HCT116 (cell line): ENCODE measurements at regions of chr6 and their contacts with region 1.

Region 1: DNA sequence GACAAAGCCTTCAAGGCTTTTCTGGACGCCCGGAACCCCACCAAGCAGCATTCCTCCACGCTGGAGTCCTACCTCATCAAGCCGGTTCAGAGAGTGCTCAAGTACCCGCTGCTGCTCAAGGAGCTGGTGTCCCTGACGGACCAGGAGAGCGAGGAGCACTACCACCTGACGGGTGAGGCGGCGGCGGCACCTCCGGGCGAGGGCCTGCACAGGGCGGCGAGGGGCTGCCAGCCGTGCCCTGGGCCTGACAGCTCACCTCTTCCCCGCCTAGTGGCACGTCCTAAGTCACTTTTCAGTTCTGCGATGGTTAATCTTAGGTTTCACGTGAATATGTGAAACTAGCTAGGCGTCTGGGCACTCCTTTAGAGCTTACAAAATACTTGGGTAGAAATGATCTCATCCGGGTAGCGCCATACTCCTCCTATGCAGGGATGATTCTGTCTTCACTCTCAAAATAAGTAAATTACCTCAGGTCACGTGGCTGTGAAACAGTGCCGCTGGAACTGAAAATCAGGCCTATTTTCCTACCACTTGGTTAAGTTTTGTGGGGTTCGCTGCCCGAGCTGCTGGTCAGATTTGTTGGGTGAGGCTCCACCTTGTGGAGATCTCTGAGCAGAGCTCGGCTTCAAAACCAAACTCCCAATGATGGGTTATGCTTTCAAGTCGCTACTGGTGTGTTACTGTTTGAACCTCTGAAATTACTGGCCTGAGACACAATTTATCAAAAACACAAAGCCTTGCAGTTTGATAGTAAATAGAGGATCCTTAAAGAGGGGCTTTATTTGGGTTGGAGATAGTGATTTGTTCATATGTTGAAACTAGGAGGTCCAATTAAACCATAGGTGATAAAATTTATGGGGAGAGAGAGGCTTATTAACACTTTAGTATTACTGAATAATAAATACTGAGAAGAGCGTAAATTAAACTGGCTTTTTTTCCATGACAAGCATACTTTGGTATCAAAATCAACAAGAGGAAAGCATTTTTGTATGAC is 15.5 kb upstream of the CLDN20 start:
- DNase-seq: peak; percentile 21
- ATAC-seq: peak; percentile 74
- H3K4me3 ChIP-seq: no peak overlapping the region
- H3K27ac ChIP-seq: no peak overlapping the region
- H3K4me1 ChIP-seq: peaks cover 0 to 12% of the 10 kb centered on the region in 2 experiments; a peak in 2 of 4 replicates
- H3K27me3 ChIP-seq: no peaks in the 10 kb centered on the region
- CTCF ChIP-seq: peak; percentile 57 to 70 (median 59); a peak in 5 of 6 replicates
- POLR2A ChIP-seq: no peak
- RAD21 ChIP-seq: peak; percentile 76

Region 2: DNA sequence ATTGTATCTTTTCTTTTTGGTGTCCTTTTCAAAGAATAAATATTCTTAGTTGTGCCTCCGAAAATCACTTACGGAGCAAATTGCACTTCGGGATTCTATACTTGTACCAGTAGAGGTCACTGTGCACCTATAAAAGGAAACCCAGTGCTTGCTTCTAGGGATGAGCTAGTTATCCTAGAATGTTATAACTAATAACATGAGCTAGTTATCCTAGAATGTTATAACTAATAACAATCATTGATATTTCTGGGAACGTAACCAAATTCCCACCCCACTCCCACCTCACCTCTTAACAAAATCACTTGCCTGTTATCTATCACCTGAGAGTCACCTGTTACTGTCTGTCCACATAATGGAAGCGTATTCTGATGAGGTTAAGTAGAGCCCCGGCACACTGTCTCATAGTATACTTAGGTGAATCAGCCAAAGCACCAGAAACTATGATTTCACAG is 380.1 kb before region 1 on chr6:
- CTCF ChIA-PET with region 1: interaction called, 14 read pairs
- POLR2A ChIA-PET with region 1: no interaction called
- RAD21 ChIA-PET with region 1: no interaction called
- intact Hi-C with region 1: loop called (anchors 10 kb)
- DNase-seq: peak; percentile 12
- ATAC-seq: peak; percentile 68
- H3K4me3 ChIP-seq: no peak overlapping the region
- H3K27ac ChIP-seq: no peak overlapping the region
- H3K4me1 ChIP-seq: no peaks in the 10 kb centered on the region
- H3K27me3 ChIP-seq: no peaks in the 10 kb centered on the region
- CTCF ChIP-seq: peak; percentile 29 to 80 (median 67); a peak in 5 of 6 replicates
- POLR2A ChIP-seq: no peak
- RAD21 ChIP-seq: peak; percentile 70